Heart right ventricle (tissue), 16 donors: ENCODE measurements at regions of chr2 and their contacts with region 1.

Region 1: GRCh38 chr2:176088048-176088936 is 4.2 kb upstream of the HOXD13 start:
- DNase-seq: peak in 1 of 2 donors; percentile 59
- ATAC-seq: peak; percentile 32 to 87 (median 78)
- H3K4me3 ChIP-seq: peak overlapping the region in 8 of 10 donors; percentile 5 to 37 (median 26)
- H3K27ac ChIP-seq: no peak overlapping the region
- H3K4me1 ChIP-seq: peaks cover 0 to 40% (median 28%) of the 10 kb centered on the region in 9 donors
- H3K27me3 ChIP-seq: peaks cover 70 to 100% (median 100%) of the 10 kb centered on the region in 7 donors
- CTCF ChIP-seq: peak; percentile 54 to 85 (median 69)

Region 2: GRCh38 chr2:175309799-175310198 is 778.5 kb before region 1 on chr2:
- intact Hi-C with region 1: loop called in 1 of 10 experiments (anchors 5 kb)
- DNase-seq: peak; percentile 6 to 16
- ATAC-seq: no peak
- H3K4me3 ChIP-seq: no peak overlapping the region
- H3K27ac ChIP-seq: no peak overlapping the region
- H3K4me1 ChIP-seq: peaks cover 0 to 14% (median 3%) of the 10 kb centered on the region in 9 donors
- H3K27me3 ChIP-seq: peaks cover 0 to 13% (median 3%) of the 10 kb centered on the region in 7 donors
- CTCF ChIP-seq: peak in 7 of 9 donors; percentile 30 to 56 (median 46)

Region 3: GRCh38 chr2:175366815-175367214 is 721.5 kb before region 1 on chr2:
- intact Hi-C with region 1: loop called in 6 of 10 experiments (anchors 2 to 5 kb)
- DNase-seq: peak in 1 of 2 donors; percentile 18
- ATAC-seq: peak in 3 of 8 donors; percentile 64 to 73 (median 67)
- H3K4me3 ChIP-seq: no peak overlapping the region
- H3K27ac ChIP-seq: no peak overlapping the region
- H3K4me1 ChIP-seq: no peaks in the 10 kb centered on the region
- H3K27me3 ChIP-seq: peaks cover 0 to 85% (median 75%) of the 10 kb centered on the region in 7 donors
- CTCF ChIP-seq: peak; percentile 50 to 84 (median 72)

Region 4: GRCh38 chr2:175414882-175415487 is 673.3 kb before region 1 on chr2:
- intact Hi-C with region 1: loop called in 1 of 10 experiments (anchors 5 kb)
- DNase-seq: peak; percentile 35 to 57
- ATAC-seq: peak in 2 of 8 donors; percentile 58 to 62
- H3K4me3 ChIP-seq: no peak overlapping the region
- H3K27ac ChIP-seq: no peak overlapping the region
- H3K4me1 ChIP-seq: peaks cover 0 to 7% (median 0%) of the 10 kb centered on the region in 9 donors
- H3K27me3 ChIP-seq: peaks cover 0 to 12% (median 0%) of the 10 kb centered on the region in 7 donors
- CTCF ChIP-seq: peak; percentile 21 to 73 (median 61)

Region 5: GRCh38 chr2:175690113-175690837 is 398.0 kb before region 1 on chr2:
- intact Hi-C with region 1: loop called in 9 of 10 experiments (anchors 2 to 5 kb)
- DNase-seq: peak in 1 of 2 donors; percentile 47
- ATAC-seq: peak in 1 of 8 donors; percentile 61
- H3K4me3 ChIP-seq: no peak overlapping the region
- H3K27ac ChIP-seq: no peak overlapping the region
- H3K4me1 ChIP-seq: no peaks in the 10 kb centered on the region
- H3K27me3 ChIP-seq: peaks cover 0 to 55% (median 34%) of the 10 kb centered on the region in 7 donors
- CTCF ChIP-seq: peak in 8 of 9 donors; percentile 55 to 87 (median 76)

Region 6: DNA sequence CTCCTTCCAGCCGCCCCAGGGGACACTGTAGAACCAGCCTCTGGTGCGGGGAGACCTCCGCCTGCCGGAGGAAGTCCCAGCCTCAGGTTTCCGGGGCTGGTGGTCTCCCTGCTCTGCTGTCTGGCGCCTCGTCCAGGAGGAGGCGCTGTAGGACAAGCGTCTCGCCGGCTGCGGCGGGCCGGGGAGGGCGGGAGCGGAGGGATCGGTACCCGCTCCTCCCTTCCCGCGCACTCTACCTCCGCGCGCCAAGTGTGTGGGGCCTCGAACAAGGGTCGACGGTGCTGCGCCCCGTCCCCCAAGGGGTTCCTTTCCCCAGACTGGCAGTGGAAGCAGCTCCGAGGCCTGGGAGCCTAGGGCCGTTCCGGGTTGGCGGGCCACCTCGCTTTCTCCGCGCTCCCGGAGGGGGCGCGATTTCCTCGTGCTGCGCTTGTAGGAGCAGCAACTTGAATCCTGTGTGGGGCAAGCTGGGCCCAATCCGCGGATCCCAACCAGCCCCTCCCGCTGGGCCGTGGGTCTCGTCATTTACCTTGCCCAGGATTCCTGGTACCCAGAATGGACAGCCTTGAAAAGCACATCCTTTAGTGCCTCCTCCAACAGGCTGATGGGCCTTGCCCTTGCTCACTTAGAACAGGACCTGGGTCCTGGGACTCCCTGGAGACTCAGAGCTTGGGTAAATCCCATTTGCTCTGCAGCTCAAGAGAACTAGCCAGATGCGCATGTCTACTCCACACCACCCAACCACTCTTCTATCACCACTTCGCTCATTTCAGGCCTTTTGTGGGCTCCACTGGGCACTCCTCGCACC is 52.4 kb after region 1 on chr2:
- intact Hi-C with region 1: no loop called
- DNase-seq: peak; percentile 49 to 69
- ATAC-seq: peak; percentile 91 to 96 (median 94)
- H3K4me3 ChIP-seq: peak overlapping the region; percentile 11 to 65 (median 46)
- H3K27ac ChIP-seq: peak overlapping the region in 3 of 10 donors; percentile 35 to 57 (median 56)
- H3K4me1 ChIP-seq: peaks cover 0 to 24% (median 18%) of the 10 kb centered on the region in 9 donors
- H3K27me3 ChIP-seq: peaks cover 22 to 100% (median 98%) of the 10 kb centered on the region in 7 donors
- CTCF ChIP-seq: peak; percentile 77 to 99 (median 93)

Region 7: DNA sequence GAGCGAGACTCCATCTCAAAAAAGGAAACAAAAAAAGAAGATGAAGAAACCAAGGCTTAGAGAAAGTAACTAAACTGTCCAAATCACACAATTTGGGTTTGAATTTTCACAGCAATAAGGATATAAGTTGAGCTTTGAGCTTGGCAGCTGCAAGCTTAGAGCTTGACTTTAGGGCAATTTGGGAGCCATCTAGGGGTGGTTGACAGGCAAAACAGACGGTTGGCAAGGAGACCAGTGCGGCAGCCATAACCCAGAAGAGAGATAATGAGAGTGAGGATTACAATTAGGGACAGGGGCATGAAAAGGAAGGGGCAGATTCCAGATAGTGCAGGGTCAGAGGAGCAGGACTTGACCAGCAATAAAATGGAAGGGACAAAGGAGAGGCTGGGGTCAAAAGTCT is 742.1 kb after region 1 on chr2:
- intact Hi-C with region 1: no loop called
- DNase-seq: no peak
- ATAC-seq: no peak
- H3K4me3 ChIP-seq: no peak overlapping the region
- H3K27ac ChIP-seq: no peak overlapping the region
- H3K4me1 ChIP-seq: no peaks in the 10 kb centered on the region
- H3K27me3 ChIP-seq: peaks cover 0 to 42% (median 26%) of the 10 kb centered on the region in 7 donors
- CTCF ChIP-seq: no peak